Activated T-helper 1 cell treated with anti-CD3 and anti-CD28 coated beads, Interleukin-12 subunit alpha, Interleukin-12 subunit beta, Interleukin-2, Interleukin-4 antibody, amounts not matched to agents 30 ng/mL and 10 ng/mL and 1 ng/mL, durations not matched to agents 14 hours and 24 hours and 36 hours (primary cell): ENCODE measurements at regions of chr6 and their contacts with region 1.

Region 1: DNA sequence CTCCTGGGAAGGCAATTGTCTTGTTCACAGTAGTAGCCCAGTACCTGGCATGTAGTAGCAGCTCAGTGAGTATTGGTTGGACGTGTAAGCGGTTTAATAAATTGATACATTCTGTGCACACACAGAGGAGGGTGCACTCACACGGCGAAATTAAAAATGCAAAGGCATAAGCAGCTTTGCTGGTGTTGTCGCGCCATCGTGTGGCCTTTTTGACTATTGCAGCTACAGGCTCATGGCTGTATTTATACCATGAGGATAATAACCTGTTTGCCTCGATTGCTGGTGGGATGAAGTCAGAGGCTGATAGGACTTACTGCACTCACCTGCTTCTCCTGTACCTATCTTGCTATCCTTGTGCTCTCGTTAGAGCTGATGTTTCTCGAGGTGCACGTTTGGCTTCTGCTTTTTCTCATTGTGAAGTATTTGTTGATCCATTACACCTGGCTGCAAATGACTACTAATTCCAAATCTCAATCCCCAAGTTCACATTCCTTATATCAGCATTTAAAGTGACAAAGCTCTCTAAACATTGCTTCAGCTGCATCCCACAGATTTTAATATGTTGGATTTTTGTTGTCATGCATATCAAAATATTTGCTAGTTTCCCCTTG is 61.5 kb downstream of the TBXT start:
- DNase-seq: peak; percentile 19
- H3K4me3 Mint-ChIP-seq: no peak overlapping the region
- H3K27ac Mint-ChIP-seq: no peak overlapping the region
- H3K4me1 Mint-ChIP-seq: no peaks in the 10 kb centered on the region
- H3K27me3 Mint-ChIP-seq: peaks cover 16% of the 10 kb centered on the region

Region 2: GRCh38 chr6:165439928-165440554 is 666.1 kb before region 1 on chr6:
- intact Hi-C with region 1: loop called (anchors 2 kb)
- DNase-seq: no peak
- H3K4me3 Mint-ChIP-seq: no peak overlapping the region
- H3K27ac Mint-ChIP-seq: no peak overlapping the region
- H3K4me1 Mint-ChIP-seq: no peaks in the 10 kb centered on the region
- H3K27me3 Mint-ChIP-seq: peaks cover 5% of the 10 kb centered on the region

Region 3: GRCh38 chr6:165729307-165729936 is 376.8 kb before region 1 on chr6:
- intact Hi-C with region 1: loop called (anchors 2 kb)
- DNase-seq: no peak
- H3K4me3 Mint-ChIP-seq: no peak overlapping the region
- H3K27ac Mint-ChIP-seq: no peak overlapping the region
- H3K4me1 Mint-ChIP-seq: no peaks in the 10 kb centered on the region
- H3K27me3 Mint-ChIP-seq: no peaks in the 10 kb centered on the region

Region 4: GRCh38 chr6:165884813-165885765 is 221.1 kb before region 1 on chr6:
- intact Hi-C with region 1: loop called (anchors 1 kb)
- DNase-seq: peak; percentile 13
- H3K4me3 Mint-ChIP-seq: no peak overlapping the region
- H3K27ac Mint-ChIP-seq: no peak overlapping the region
- H3K4me1 Mint-ChIP-seq: peaks cover 7% of the 10 kb centered on the region
- H3K27me3 Mint-ChIP-seq: peaks cover 6% of the 10 kb centered on the region